PC-3 (cell line): ENCODE measurements at regions of chr18 and their contacts with region 1.

Region 1: DNA sequence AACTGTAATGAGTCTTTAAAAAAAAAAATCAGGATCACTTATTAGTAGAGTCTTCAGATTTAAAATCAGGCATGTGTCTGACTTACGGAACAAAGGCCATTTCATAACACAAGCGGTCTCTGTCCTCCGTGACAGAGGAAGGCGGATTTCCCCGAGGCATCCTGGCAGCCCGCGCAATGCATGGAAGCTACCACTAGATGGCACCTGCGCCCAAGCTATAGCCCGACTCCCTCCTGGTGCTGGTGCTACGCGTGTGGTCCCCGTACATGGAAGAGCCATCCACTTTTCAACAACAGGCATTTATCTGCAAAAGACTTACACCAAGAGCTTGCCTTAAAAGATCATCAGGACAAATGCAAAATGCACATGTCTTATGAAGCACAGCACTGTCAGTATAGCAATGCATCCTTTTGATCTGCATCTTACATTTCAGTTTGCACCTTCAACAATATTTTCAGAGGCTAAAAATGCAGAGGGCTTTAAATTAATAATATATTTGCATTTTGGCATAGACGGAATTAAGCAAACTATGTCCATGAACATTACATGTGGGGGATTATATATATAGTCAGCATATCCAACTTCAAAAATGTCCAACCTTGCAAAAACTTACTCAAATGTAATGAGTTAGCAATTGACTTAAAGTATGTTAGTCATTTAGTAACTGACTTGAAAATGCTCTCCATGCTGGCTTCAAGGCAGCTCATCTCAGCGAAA is 96.0 kb downstream of the ZNF516 start:
- DNase-seq: peak; percentile 74
- ATAC-seq: peak; percentile 88
- H3K4me3 ChIP-seq: no peak overlapping the region
- H3K27ac ChIP-seq: no peak overlapping the region
- H3K4me1 ChIP-seq: no peaks in the 10 kb centered on the region
- H3K27me3 ChIP-seq: peaks cover 17% of the 10 kb centered on the region
- CTCF ChIP-seq: peak; percentile 96

Region 2: DNA sequence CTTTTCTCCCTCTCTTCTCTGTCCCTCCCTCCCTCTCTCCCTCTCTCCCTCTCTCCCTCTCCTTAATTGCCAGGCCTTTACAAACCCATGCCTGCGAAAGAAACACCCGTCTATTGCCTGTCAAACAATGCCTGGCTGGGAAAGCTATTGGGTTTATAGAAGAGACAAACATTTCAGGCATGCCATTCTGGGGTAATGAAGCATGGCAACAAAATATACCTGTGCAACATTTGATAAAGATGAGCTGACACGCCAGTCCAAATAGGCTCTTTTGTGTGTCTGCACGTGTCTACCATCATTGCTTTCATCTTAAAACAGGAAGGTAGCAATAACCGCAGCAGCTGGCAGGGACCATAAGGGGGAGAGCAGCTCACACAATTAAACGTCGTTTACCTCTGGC is 186.1 kb before region 1 on chr18:
- CTCF ChIA-PET with region 1: no interaction called
- POLR2A ChIA-PET with region 1: no interaction called
- intact Hi-C with region 1: no loop called
- DNase-seq: no peak
- ATAC-seq: no peak
- H3K4me3 ChIP-seq: no peak overlapping the region
- H3K27ac ChIP-seq: no peak overlapping the region
- H3K4me1 ChIP-seq: no peaks in the 10 kb centered on the region
- H3K27me3 ChIP-seq: peaks cover 37% of the 10 kb centered on the region
- CTCF ChIP-seq: no peak

Region 3: GRCh38 chr18:76686737-76687262 is 287.7 kb after region 1 on chr18:
- CTCF ChIA-PET with region 1: no interaction called
- POLR2A ChIA-PET with region 1: no interaction called
- intact Hi-C with region 1: loop called (anchors 1 kb)
- DNase-seq: peak; percentile 70
- ATAC-seq: peak; percentile 91
- H3K4me3 ChIP-seq: no peak overlapping the region
- H3K27ac ChIP-seq: no peak overlapping the region
- H3K4me1 ChIP-seq: no peaks in the 10 kb centered on the region
- H3K27me3 ChIP-seq: peaks cover 82% of the 10 kb centered on the region
- CTCF ChIP-seq: peak; percentile 73

Region 4: GRCh38 chr18:76709659-76710645 is 310.9 kb after region 1 on chr18:
- CTCF ChIA-PET with region 1: interaction called, 3 read pairs
- POLR2A ChIA-PET with region 1: no interaction called
- intact Hi-C with region 1: loop called (anchors 1 kb)
- DNase-seq: peak; percentile 66
- ATAC-seq: peak; percentile 80
- H3K4me3 ChIP-seq: no peak overlapping the region
- H3K27ac ChIP-seq: no peak overlapping the region
- H3K4me1 ChIP-seq: no peaks in the 10 kb centered on the region
- H3K27me3 ChIP-seq: peaks cover 26% of the 10 kb centered on the region
- CTCF ChIP-seq: peak; percentile 91